ENCODE measurements at regions of chr4 and their contacts with region 1.

Region 1: DNA sequence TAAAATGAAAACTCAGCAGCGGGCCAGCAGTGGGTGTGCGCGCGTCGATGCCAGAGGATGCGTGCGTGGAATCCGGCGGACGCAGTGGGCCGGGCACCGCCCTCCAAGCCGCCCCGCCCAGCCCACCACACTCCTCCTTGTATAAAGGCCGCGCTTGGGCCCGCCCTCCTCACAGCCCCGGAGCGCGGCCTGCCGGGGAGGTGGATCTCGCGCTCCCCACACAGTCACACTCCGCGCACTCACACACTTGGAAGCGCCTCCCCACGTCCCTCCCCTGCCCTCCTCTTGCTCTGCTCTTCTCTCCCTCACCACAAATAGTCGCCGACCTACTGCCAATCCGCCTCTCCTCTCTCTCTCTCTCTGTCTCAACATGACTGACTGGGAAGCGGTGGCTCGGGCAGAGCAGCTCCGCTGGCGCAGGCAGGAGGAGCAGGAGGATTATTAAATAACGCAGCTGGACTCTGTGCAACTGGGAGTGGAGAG is at the start of gene CCSER1:
- DNase-seq: peak; percentile 66
- H3K4me3 ChIP-seq: peak within 1 kb of the TSS; percentile 51 to 76 (median 63)
- H3K27ac ChIP-seq: no peak within 1 kb of the TSS
- H3K4me1 ChIP-seq: peaks cover 13% of the 10 kb centered on the region
- H3K27me3 ChIP-seq: peaks cover 2 to 4% of the 10 kb centered on the region in 2 experiments
- CTCF ChIP-seq: no peak
- POLR2A ChIP-seq: peak; percentile 67
- total RNA-seq, gene CCSER1: 0.92 and 1.8 TPM in 2 replicates

Region 2: GRCh38 chr4:90148574-90149148 is 21.4 kb after region 1 on chr4:
- CTCF ChIA-PET with region 1: no interaction called
- POLR2A ChIA-PET with region 1: interaction called, 4 read pairs
- dilution Hi-C with region 1: no loop called
- intact Hi-C with region 1: loop called (anchors 2 kb)
- DNase-seq: no peak
- H3K4me3 ChIP-seq: no peak overlapping the region
- H3K27ac ChIP-seq: no peak overlapping the region
- H3K4me1 ChIP-seq: no peaks in the 10 kb centered on the region
- H3K27me3 ChIP-seq: no peaks in the 10 kb centered on the region
- CTCF ChIP-seq: no peak
- POLR2A ChIP-seq: no peak

Region 3: DNA sequence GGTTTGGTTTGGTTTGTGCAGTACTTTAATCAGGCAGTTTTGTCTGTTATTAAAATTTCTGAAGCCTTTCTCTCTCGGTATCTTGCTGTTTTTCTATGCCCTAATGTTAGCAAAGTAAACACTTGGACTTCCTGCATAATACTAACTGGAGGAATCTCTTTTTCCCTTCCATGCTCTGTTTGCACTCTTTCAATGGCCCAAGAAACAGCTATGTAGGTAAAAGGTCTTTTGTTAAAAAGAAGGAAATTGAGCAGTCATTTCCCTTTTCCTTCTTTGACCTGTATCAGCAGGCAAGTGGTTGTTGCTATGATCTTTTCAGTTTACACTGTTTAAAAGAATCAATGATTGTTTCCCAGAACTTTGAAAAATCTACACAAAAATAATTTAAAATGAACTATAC is 82.7 kb after region 1 on chr4:
- CTCF ChIA-PET with region 1: no interaction called
- POLR2A ChIA-PET with region 1: no interaction called
- dilution Hi-C with region 1: no loop called
- intact Hi-C with region 1: loop called (anchors 1 kb)
- DNase-seq: peak; percentile 95
- H3K4me3 ChIP-seq: peak overlapping the region in 1 of 3 experiments; percentile 21
- H3K27ac ChIP-seq: peak overlapping the region; percentile 53
- H3K4me1 ChIP-seq: peaks cover 22% of the 10 kb centered on the region
- H3K27me3 ChIP-seq: no peaks in the 10 kb centered on the region
- CTCF ChIP-seq: no peak
- POLR2A ChIP-seq: no peak

Measured in endothelial cell of umbilical vein (primary cell).